ENCODE measurements at regions of chr7 and their contacts with region 1.

Region 1: GRCh38 chr7:148575640-148576411 is 14.7 kb upstream of the C7orf33 start:
- DNase-seq: peak; percentile 71
- ATAC-seq: peak; percentile 90
- H3K4me3 ChIP-seq: no peak overlapping the region
- H3K27ac ChIP-seq: no peak overlapping the region
- H3K4me1 ChIP-seq: no peaks in the 10 kb centered on the region
- H3K27me3 ChIP-seq: no peaks in the 10 kb centered on the region
- CTCF ChIP-seq: peak; percentile 85

Region 2: GRCh38 chr7:148761499-148762278 is 185.9 kb after region 1 on chr7:
- CTCF ChIA-PET with region 1: no interaction called
- POLR2A ChIA-PET with region 1: no interaction called
- intact Hi-C with region 1: no loop called
- DNase-seq: no peak
- ATAC-seq: no peak
- H3K4me3 ChIP-seq: no peak overlapping the region
- H3K27ac ChIP-seq: no peak overlapping the region
- H3K4me1 ChIP-seq: no peaks in the 10 kb centered on the region
- H3K27me3 ChIP-seq: no peaks in the 10 kb centered on the region
- CTCF ChIP-seq: no peak

Region 3: DNA sequence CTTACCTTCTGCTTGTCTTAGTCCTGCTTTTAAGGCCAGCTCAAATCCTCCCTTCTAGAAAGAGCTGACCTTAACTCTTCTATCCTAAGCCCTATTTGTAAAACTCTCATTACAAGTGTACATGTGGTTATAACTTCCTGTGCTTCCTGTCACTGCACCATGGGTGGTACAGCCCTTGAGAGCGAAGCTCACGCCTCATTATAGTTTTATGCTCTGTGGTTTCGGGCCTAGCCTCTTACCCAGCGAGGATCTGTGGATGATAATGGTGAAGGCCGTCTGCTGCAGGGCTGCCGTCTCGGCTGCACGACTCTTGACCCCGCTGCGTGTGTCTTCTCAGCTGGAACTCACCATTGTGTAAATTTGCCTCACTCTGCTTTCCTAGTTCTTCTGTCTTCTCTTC is 197.5 kb after region 1 on chr7:
- CTCF ChIA-PET with region 1: no interaction called
- POLR2A ChIA-PET with region 1: no interaction called
- intact Hi-C with region 1: loop called (anchors 1 kb)
- DNase-seq: no peak
- ATAC-seq: no peak
- H3K4me3 ChIP-seq: no peak overlapping the region
- H3K27ac ChIP-seq: peak overlapping the region; percentile 57
- H3K4me1 ChIP-seq: peaks cover 17% of the 10 kb centered on the region
- H3K27me3 ChIP-seq: no peaks in the 10 kb centered on the region
- CTCF ChIP-seq: no peak

Region 4: GRCh38 chr7:148819697-148820360 is 244.0 kb after region 1 on chr7:
- CTCF ChIA-PET with region 1: interaction called, 11 read pairs
- POLR2A ChIA-PET with region 1: no interaction called
- intact Hi-C with region 1: no loop called
- DNase-seq: peak; percentile 43
- ATAC-seq: peak; percentile 74
- H3K4me3 ChIP-seq: no peak overlapping the region; the same call in 1 of the 2 replicates
- H3K27ac ChIP-seq: peak overlapping the region; percentile 13; the same call in 1 of the 2 replicates
- H3K4me1 ChIP-seq: peaks cover 14% of the 10 kb centered on the region
- H3K27me3 ChIP-seq: no peaks in the 10 kb centered on the region
- CTCF ChIP-seq: no peak